Calu3 (cell line): ENCODE measurements at regions of chr1 and their contacts with region 1.

Region 1: DNA sequence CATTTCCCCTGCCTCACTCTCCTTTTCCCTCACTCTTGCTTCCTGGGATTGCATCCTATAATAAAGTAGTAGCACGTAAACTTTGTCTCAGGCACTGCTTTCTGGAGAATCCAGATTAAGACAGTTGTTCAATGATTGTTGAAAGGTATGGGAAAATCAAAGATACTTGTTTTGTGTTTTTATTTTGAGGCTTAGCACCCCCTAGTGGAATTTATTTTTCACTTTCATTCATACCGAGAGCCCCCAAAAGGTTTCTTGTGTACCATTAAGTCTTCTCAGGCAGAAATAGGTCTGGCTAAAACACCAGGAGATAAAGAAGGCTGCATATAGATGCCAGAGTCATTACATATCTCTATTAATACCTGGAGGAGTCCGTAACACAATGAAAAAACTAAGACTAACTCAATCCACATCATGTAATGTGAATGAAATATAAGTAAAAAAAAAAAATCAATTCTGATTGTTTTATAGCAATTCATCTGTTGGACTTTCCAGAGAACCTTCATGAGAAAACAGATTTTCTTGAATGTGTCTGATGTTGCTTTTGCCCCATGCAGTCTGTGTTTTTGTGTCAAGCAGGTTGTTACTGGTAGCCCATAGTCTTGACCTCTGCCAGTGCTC is 103.5 kb downstream of the RPE65 start:
- DNase-seq: no peak
- H3K4me3 Mint-ChIP-seq: no peak overlapping the region
- H3K27ac Mint-ChIP-seq: peak overlapping the region; percentile 30
- H3K4me1 Mint-ChIP-seq: peaks cover 12% of the 10 kb centered on the region
- H3K27me3 Mint-ChIP-seq: no peaks in the 10 kb centered on the region
- CTCF ChIP-seq: peak; percentile 25

Region 2: GRCh38 chr1:68384321-68384813 is 38.1 kb after region 1 on chr1:
- CTCF ChIA-PET with region 1: interaction called, 6 read pairs
- intact Hi-C with region 1: loop called (anchors 1 kb)
- DNase-seq: peak; percentile 67
- H3K4me3 Mint-ChIP-seq: no peak overlapping the region
- H3K27ac Mint-ChIP-seq: peak overlapping the region; percentile 87
- H3K4me1 Mint-ChIP-seq: peaks cover 49% of the 10 kb centered on the region
- H3K27me3 Mint-ChIP-seq: no peaks in the 10 kb centered on the region
- CTCF ChIP-seq: no peak

Region 3: DNA sequence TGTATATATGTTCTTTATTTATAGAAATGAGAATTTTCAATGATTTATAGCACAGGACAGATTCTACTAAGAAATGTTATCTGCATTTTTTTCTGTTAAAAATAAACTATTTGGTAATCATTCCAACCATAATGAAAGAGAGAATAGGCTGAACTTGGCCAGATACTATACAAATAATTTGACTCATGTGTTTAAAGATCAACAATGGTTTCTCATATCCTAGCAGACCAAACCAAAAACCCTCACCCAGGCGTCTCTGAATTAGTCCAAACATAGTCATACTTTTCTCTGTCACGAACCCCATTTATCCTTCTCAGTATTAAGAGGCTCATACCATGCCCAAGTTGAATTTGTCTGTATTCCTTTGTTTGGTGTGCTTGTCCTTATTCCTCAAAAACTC is 63.1 kb after region 1 on chr1:
- CTCF ChIA-PET with region 1: no interaction called
- intact Hi-C with region 1: no loop called
- DNase-seq: no peak
- H3K4me3 Mint-ChIP-seq: no peak overlapping the region
- H3K27ac Mint-ChIP-seq: no peak overlapping the region
- H3K4me1 Mint-ChIP-seq: peaks cover 11% of the 10 kb centered on the region
- H3K27me3 Mint-ChIP-seq: no peaks in the 10 kb centered on the region
- CTCF ChIP-seq: no peak